T-cell (primary cell): ENCODE measurements at regions of chr3 and their contacts with region 1.

Region 1: DNA sequence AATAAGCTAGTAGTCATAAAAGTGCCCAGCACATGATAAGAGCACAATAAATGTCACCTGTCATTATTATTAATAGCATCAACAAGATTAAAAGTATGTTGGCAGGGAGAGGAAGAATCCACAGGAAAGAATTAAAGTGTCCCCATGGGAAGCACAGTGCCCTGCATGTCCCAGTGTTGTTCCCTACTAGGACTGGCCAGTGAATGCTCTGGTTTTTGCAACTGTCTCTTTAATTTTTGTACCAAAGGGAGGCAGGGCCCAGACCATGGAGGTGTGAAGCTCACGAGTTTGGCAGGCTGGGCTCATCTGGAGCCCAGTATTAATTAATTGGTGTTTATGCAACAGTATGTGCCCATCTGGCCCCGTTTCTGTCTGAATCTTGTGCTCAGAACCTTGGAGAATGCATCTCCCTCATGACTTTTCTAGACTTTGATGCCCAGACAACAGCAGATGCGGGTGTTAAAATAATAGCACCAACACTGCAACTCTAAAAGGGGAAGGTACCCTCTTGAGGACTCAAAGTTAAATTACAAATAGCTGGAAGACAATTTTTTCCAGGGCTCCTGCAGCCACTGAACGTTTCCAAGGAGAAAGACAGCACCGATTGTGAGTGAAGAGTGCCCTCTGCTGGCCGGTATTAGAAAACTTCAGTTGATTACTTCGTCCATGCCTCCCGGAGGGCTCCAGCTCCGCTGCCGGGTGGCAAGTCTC is 71.9 kb upstream of the SPATA12 start:
- DNase-seq: peak; percentile 11 to 88 (median 58)
- ATAC-seq: peak; percentile 53 to 76 (median 70)
- H3K4me3 ChIP-seq: no peak overlapping the region
- H3K4me3 Mint-ChIP-seq: no peak overlapping the region
- H3K27ac ChIP-seq: no peak overlapping the region
- H3K27ac Mint-ChIP-seq: no peak overlapping the region
- H3K4me1 ChIP-seq: peaks cover 0 to 19% of the 10 kb centered on the region in 2 experiments
- H3K4me1 Mint-ChIP-seq: peaks cover 14 to 19% (median 16%) of the 10 kb centered on the region in 3 donors
- H3K27me3 ChIP-seq: peaks cover 0 to 13% of the 10 kb centered on the region in 2 experiments
- H3K27me3 Mint-ChIP-seq: peaks cover 3 to 17% of the 10 kb centered on the region in 2 donors

Region 2: DNA sequence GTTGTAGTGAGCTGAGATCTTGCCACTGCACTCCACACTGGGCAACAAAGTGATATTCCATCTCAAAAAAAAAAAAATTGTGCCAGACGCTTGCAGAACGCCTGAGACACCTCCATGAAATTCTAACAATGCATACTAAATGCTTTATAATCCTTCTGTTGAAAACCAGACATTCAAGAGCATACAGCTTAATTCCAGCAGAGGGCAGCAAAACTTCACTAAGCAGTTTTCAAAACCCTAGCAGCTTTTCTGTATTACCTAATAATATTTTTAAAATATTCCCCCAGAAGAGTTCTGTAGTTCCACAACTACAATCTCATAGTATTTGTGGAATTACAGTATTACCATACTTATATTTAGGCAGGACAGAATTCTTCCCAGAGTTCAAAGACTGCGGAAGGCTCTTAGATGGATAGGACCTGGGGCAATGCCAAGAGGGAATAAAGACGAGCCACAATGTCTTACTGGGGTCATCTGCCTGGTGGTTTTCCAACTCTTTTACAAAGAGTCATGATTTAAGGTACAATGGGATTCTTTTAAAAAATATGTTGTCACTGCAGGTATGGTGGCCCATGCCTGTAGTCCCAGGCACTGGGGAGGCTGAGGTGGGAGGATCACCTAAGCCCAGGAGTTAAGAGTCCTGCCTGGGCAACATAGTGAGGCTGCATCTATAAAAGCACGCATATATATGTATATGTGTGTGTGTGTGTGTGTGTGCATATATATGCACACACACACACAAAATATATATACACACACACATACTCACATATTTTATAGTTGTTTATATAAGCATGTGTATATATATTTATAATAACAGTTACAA is 285.9 kb before region 1 on chr3:
- CTCF ChIA-PET with region 1: interaction called, 37 to 51 read pairs
- POLR2A ChIA-PET with region 1: interaction called in 1 of 2 experiments, 3 read pairs
- DNase-seq: peak in 27 of 35 experiments; percentile 13 to 88 (median 43)
- ATAC-seq: peak; percentile 70 to 79 (median 72)
- H3K4me3 ChIP-seq: no peak overlapping the region
- H3K4me3 Mint-ChIP-seq: no peak overlapping the region
- H3K27ac ChIP-seq: no peak overlapping the region
- H3K27ac Mint-ChIP-seq: peak overlapping the region in 1 of 2 donors; percentile 28
- H3K4me1 ChIP-seq: peaks cover 5 to 15% of the 10 kb centered on the region in 2 experiments
- H3K4me1 Mint-ChIP-seq: peaks cover 19 to 27% (median 24%) of the 10 kb centered on the region in 3 donors
- H3K27me3 ChIP-seq: no peaks in the 10 kb centered on the region
- H3K27me3 Mint-ChIP-seq: no peaks in the 10 kb centered on the region

Region 3: DNA sequence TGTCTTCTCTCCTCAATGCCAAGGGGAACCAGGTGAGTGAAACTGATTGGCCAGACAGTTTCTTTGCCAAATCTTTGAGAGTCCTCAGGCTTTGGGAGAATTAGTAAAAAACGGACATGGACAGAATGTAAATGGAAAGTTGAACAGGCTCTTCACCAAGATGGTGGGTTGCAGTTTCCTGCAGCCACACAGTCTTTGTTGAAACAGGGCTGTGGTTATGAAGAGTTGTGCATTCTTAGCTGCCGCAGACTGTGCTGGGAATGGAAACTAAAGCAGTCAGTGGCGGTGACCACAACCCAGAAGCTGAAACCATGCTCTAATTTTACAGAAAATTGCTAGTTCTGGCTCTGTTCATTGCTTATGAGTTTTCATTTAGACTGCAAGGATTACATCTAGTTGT is 263.4 kb before region 1 on chr3:
- CTCF ChIA-PET with region 1: interaction called in 1 of 2 experiments, 3 read pairs
- POLR2A ChIA-PET with region 1: interaction called in 1 of 2 experiments, 10 read pairs
- DNase-seq: peak in 34 of 35 experiments; percentile 22 to 73 (median 51)
- ATAC-seq: peak; percentile 81 to 91 (median 86)
- H3K4me3 ChIP-seq: no peak overlapping the region
- H3K4me3 Mint-ChIP-seq: peak overlapping the region; percentile 11 to 58 (median 34)
- H3K27ac ChIP-seq: peak overlapping the region; percentile 52
- H3K27ac Mint-ChIP-seq: peak overlapping the region; percentile 87 to 91
- H3K4me1 ChIP-seq: peaks cover 24 to 34% of the 10 kb centered on the region in 2 experiments
- H3K4me1 Mint-ChIP-seq: peaks cover 59 to 68% (median 62%) of the 10 kb centered on the region in 3 donors
- H3K27me3 ChIP-seq: no peaks in the 10 kb centered on the region
- H3K27me3 Mint-ChIP-seq: no peaks in the 10 kb centered on the region

Region 4: GRCh38 chr3:56894881-56895431 is 93.7 kb before region 1 on chr3:
- CTCF ChIA-PET with region 1: interaction called in 1 of 2 experiments, 11 read pairs
- POLR2A ChIA-PET with region 1: no interaction called
- DNase-seq: peak in 8 of 35 experiments; percentile 12 to 47 (median 20)
- ATAC-seq: peak; percentile 48 to 75 (median 73)
- H3K4me3 ChIP-seq: peak overlapping the region in 1 of 2 donors; percentile 32
- H3K4me3 Mint-ChIP-seq: no peak overlapping the region
- H3K27ac ChIP-seq: no peak overlapping the region
- H3K27ac Mint-ChIP-seq: peak overlapping the region; percentile 55 to 86
- H3K4me1 ChIP-seq: peaks cover 33 to 37% of the 10 kb centered on the region in 2 experiments
- H3K4me1 Mint-ChIP-seq: peaks cover 61 to 74% (median 70%) of the 10 kb centered on the region in 3 donors
- H3K27me3 ChIP-seq: no peaks in the 10 kb centered on the region
- H3K27me3 Mint-ChIP-seq: no peaks in the 10 kb centered on the region

Region 5: GRCh38 chr3:56937580-56937979 is 51.0 kb before region 1 on chr3:
- CTCF ChIA-PET with region 1: no interaction called
- POLR2A ChIA-PET with region 1: no interaction called
- DNase-seq: no peak
- ATAC-seq: no peak
- H3K4me3 ChIP-seq: no peak overlapping the region
- H3K4me3 Mint-ChIP-seq: no peak overlapping the region
- H3K27ac ChIP-seq: no peak overlapping the region
- H3K27ac Mint-ChIP-seq: no peak overlapping the region
- H3K4me1 ChIP-seq: no peaks in the 10 kb centered on the region
- H3K4me1 Mint-ChIP-seq: peaks cover 7 to 17% (median 8%) of the 10 kb centered on the region in 3 donors
- H3K27me3 ChIP-seq: no peaks in the 10 kb centered on the region
- H3K27me3 Mint-ChIP-seq: no peaks in the 10 kb centered on the region